ENCODE measurements at regions of chr1 and their contacts with region 1.

Region 1: GRCh38 chr1:53655931-53656746 is 82.8 kb downstream of the GLIS1 start:
- DNase-seq: peak; percentile 17
- H3K4me3 ChIP-seq: no peak overlapping the region
- H3K27ac ChIP-seq: no peak overlapping the region
- H3K4me1 ChIP-seq: no peaks in the 10 kb centered on the region
- H3K27me3 ChIP-seq: peaks cover 2% of the 10 kb centered on the region
- CTCF ChIP-seq: no peak

Region 2: DNA sequence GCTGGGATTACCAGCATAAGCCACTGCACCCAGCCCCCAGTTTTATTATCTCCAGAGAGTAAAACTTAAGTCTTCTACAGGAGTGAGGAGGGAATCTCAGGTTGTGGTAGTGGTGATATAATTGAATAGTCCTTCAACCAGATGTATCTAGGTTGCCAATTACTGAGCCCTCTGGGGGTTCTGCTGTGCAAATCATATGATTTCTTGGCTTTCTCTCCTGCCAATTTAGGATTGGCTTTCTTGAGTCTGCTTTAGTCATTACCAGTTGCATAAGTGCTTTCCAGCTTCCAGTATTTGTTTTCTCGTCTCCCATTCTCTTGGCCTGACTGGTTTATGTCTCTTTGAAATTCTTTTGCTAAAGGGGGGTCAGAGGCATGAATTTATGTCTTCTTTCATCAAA is 448.4 kb before region 1 on chr1:
- CTCF ChIA-PET with region 1: interaction called, 10 read pairs
- dilution Hi-C with region 1: no loop called
- in situ Hi-C with region 1: no loop called
- intact Hi-C with region 1: no loop called
- DNase-seq: no peak
- H3K4me3 ChIP-seq: no peak overlapping the region
- H3K27ac ChIP-seq: no peak overlapping the region
- H3K4me1 ChIP-seq: no peaks in the 10 kb centered on the region
- H3K27me3 ChIP-seq: no peaks in the 10 kb centered on the region
- CTCF ChIP-seq: no peak

Region 3: DNA sequence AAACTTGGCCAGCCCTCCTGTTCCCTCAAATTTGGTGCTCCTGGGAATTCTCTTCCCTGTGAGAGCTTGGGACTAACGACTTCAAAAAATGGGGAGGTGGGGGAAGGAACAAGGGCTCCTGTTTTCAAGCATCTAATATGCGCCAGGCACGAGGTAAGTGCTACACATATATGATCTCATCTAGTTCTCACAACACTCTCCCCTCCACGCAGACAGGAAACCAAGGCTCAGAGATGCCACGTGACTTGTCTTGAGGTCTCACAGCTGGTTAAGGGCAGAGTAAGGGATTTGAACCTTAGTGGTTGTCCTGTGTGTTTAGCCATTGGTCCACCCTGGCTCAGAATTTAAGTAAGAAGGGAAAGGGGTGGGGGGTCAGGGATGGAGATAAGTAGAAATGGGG is 71.0 kb before region 1 on chr1:
- CTCF ChIA-PET with region 1: no interaction called
- dilution Hi-C with region 1: no loop called
- in situ Hi-C with region 1: no loop called
- intact Hi-C with region 1: no loop called
- DNase-seq: no peak
- H3K4me3 ChIP-seq: no peak overlapping the region
- H3K27ac ChIP-seq: no peak overlapping the region
- H3K4me1 ChIP-seq: no peaks in the 10 kb centered on the region
- H3K27me3 ChIP-seq: peaks cover 7% of the 10 kb centered on the region
- CTCF ChIP-seq: no peak